B cell (primary cell): ENCODE measurements at regions of chr12 and their contacts with region 1.

Region 1: DNA sequence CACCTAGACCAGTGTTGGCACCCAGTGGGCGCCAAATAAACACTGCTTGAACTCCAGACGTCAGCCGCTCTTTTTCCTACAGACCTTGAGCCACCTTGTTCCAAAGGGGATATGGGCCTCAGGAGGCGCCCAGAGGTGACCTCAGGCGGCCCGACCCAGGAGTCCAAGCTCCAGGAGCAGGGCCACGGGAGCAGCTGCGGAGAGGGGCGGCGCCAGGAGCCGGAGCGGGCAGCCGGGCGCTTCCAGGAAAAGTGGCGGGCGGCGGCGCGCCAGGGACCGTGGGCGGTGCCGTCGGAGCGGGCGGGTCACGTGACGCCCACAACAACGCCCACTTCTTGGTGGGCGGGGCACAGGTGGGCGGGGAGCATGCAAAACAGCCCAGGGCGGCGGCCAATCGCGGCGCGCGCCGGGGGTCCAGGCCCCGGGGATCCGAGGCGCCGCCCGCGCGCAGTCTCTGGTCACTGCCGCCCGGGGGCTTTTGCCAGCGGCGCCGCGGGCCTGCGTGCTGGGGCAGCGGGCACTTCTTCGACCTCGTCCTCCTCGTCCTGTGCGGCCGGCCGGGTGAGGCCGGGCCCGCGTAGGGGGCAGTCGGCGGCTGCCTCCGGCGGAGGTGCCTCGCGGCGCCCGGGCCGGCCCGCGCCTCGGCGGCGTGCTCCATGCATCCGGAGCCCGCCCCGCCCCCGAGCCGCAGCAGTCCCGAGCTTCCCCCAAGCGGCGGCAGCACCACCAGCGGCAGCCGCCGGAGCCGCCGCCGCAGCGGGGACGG is at the start of gene ORAI1:
- DNase-seq: peak; percentile 97
- ATAC-seq: peak; percentile 76
- H3K4me3 ChIP-seq: peak within 1 kb of the TSS; percentile 61 to 93 (median 82)
- H3K4me3 Mint-ChIP-seq: peak within 1 kb of the TSS; percentile 96
- H3K27ac ChIP-seq: peak within 1 kb of the TSS; percentile 87 to 91
- H3K27ac Mint-ChIP-seq: peak within 1 kb of the TSS; percentile 96
- H3K4me1 ChIP-seq: peaks cover 40 to 50% of the 10 kb centered on the region in 2 donors
- H3K4me1 Mint-ChIP-seq: peaks cover 48% of the 10 kb centered on the region
- H3K27me3 ChIP-seq: no peaks in the 10 kb centered on the region
- H3K27me3 Mint-ChIP-seq: no peaks in the 10 kb centered on the region
- CTCF ChIP-seq: no peak
- total RNA-seq, gene ORAI1: 43.2 and 44.2 TPM in 2 replicates

Region 2: GRCh38 chr12:121467115-121467793 is 159.0 kb before region 1 on chr12:
- CTCF ChIA-PET with region 1: interaction called, 3 read pairs
- POLR2A ChIA-PET with region 1: interaction called, 4 read pairs
- intact Hi-C with region 1: loop called (anchors 2 kb)
- DNase-seq: peak; percentile 94
- ATAC-seq: peak; percentile 85
- H3K4me3 ChIP-seq: peak overlapping the region in 4 of 5 experiments; percentile 56 to 82 (median 76)
- H3K4me3 Mint-ChIP-seq: peak overlapping the region; percentile 49
- H3K27ac ChIP-seq: peak overlapping the region; percentile 62 to 82
- H3K27ac Mint-ChIP-seq: peak overlapping the region; percentile 86
- H3K4me1 ChIP-seq: peaks cover 23 to 49% of the 10 kb centered on the region in 2 donors
- H3K4me1 Mint-ChIP-seq: peaks cover 59% of the 10 kb centered on the region
- H3K27me3 ChIP-seq: no peaks in the 10 kb centered on the region
- H3K27me3 Mint-ChIP-seq: no peaks in the 10 kb centered on the region
- CTCF ChIP-seq: no peak

Region 3: GRCh38 chr12:121560392-121561008 is 65.8 kb before region 1 on chr12:
- CTCF ChIA-PET with region 1: interaction called, 213 read pairs
- POLR2A ChIA-PET with region 1: interaction called, 9 read pairs
- intact Hi-C with region 1: no loop called
- DNase-seq: peak; percentile 90
- ATAC-seq: peak; percentile 78
- H3K4me3 ChIP-seq: no peak overlapping the region
- H3K4me3 Mint-ChIP-seq: peak overlapping the region; percentile 53
- H3K27ac ChIP-seq: peak overlapping the region; percentile 58
- H3K27ac Mint-ChIP-seq: peak overlapping the region; percentile 91
- H3K4me1 ChIP-seq: peaks cover 29 to 48% of the 10 kb centered on the region in 2 donors
- H3K4me1 Mint-ChIP-seq: peaks cover 40% of the 10 kb centered on the region
- H3K27me3 ChIP-seq: no peaks in the 10 kb centered on the region
- H3K27me3 Mint-ChIP-seq: no peaks in the 10 kb centered on the region
- CTCF ChIP-seq: no peak

Region 4: GRCh38 chr12:121590476-121591143 is 35.7 kb before region 1 on chr12:
- CTCF ChIA-PET with region 1: interaction called, 29 read pairs
- POLR2A ChIA-PET with region 1: interaction called, 33 read pairs
- intact Hi-C with region 1: loop called (anchors 1 kb)
- DNase-seq: peak; percentile 82
- ATAC-seq: peak; percentile 67
- H3K4me3 ChIP-seq: peak overlapping the region; percentile 15 to 61 (median 47)
- H3K4me3 Mint-ChIP-seq: peak overlapping the region; percentile 92
- H3K27ac ChIP-seq: peak overlapping the region; percentile 96 to 99
- H3K27ac Mint-ChIP-seq: peak overlapping the region; percentile 100
- H3K4me1 ChIP-seq: peaks cover 26 to 37% of the 10 kb centered on the region in 2 donors
- H3K4me1 Mint-ChIP-seq: peaks cover 34% of the 10 kb centered on the region
- H3K27me3 ChIP-seq: no peaks in the 10 kb centered on the region
- H3K27me3 Mint-ChIP-seq: no peaks in the 10 kb centered on the region
- CTCF ChIP-seq: no peak

Region 5: DNA sequence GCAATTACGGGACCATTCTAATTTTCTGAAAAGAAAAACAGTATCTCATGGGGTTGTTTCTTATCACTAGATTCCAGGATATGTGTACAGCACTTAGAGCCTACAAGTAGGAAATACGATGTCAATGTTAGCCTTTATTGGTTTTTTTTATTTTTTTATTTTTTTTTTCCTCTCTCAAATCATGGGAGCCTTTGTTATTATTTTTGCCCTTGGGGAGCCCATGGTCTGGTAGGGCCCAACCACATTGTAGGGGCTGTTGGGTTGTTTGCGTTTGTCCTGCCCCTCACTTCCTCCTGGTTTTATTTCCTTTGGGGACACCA is 37.3 kb after region 1 on chr12:
- CTCF ChIA-PET with region 1: interaction called, 53 read pairs
- POLR2A ChIA-PET with region 1: interaction called, 19 read pairs
- intact Hi-C with region 1: loop called (anchors 1 kb)
- DNase-seq: no peak
- ATAC-seq: no peak
- H3K4me3 ChIP-seq: peak overlapping the region in 4 of 5 experiments; percentile 10 to 93 (median 77)
- H3K4me3 Mint-ChIP-seq: peak overlapping the region; percentile 92
- H3K27ac ChIP-seq: peak overlapping the region in 1 of 2 donors; percentile 86
- H3K27ac Mint-ChIP-seq: peak overlapping the region; percentile 94
- H3K4me1 ChIP-seq: peaks cover 39 to 48% of the 10 kb centered on the region in 2 donors
- H3K4me1 Mint-ChIP-seq: peaks cover 47% of the 10 kb centered on the region
- H3K27me3 ChIP-seq: no peaks in the 10 kb centered on the region
- H3K27me3 Mint-ChIP-seq: no peaks in the 10 kb centered on the region
- CTCF ChIP-seq: no peak

Region 6: DNA sequence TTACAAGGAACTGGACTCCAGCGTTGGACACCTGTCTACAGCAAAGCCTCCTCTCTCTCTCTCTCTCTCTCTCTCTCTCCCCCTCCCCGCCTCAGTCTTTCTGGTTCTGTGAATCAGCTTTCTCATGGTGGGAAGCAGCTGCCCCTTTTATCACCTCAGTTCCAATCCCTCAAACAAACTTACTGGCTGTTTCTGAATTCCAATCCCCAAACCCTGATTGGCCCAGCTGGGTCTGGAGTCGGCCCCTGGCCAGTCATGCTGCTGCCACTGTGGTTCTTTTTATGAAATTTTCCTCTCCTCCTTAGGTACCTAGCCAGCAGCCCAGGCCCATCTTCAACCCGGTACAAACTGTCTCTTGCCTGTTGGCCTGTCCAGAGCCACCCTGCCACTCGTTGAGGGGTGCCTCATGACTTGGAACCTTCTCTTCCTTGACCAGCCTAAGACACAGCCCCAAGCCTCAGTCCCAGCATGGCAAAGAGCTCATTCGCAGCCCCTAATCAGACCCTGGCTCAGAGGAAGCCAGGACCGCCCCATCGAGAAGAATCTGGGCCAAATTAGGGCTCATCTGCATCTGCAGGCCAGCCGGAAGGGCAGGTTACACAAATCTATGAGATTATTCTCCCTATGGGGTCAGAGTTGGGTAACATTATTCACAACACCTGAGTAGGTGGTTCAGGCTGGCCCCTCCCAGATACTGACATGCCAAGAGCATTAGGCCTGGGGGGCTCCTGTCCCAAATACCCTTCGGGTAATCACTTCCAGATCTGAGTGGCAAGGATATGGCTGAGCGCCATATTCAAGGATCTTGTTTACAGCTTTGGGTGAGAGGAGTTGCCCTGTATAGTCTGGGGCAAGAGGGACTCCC is 52.7 kb after region 1 on chr12:
- CTCF ChIA-PET with region 1: interaction called, 39 read pairs
- POLR2A ChIA-PET with region 1: interaction called, 7 read pairs
- intact Hi-C with region 1: no loop called
- DNase-seq: no peak
- ATAC-seq: no peak
- H3K4me3 ChIP-seq: no peak overlapping the region
- H3K4me3 Mint-ChIP-seq: no peak overlapping the region
- H3K27ac ChIP-seq: no peak overlapping the region
- H3K27ac Mint-ChIP-seq: peak overlapping the region; percentile 65
- H3K4me1 ChIP-seq: peaks cover 0 to 3% of the 10 kb centered on the region in 2 donors
- H3K4me1 Mint-ChIP-seq: peaks cover 2% of the 10 kb centered on the region
- H3K27me3 ChIP-seq: no peaks in the 10 kb centered on the region
- H3K27me3 Mint-ChIP-seq: no peaks in the 10 kb centered on the region
- CTCF ChIP-seq: no peak

Region 7: DNA sequence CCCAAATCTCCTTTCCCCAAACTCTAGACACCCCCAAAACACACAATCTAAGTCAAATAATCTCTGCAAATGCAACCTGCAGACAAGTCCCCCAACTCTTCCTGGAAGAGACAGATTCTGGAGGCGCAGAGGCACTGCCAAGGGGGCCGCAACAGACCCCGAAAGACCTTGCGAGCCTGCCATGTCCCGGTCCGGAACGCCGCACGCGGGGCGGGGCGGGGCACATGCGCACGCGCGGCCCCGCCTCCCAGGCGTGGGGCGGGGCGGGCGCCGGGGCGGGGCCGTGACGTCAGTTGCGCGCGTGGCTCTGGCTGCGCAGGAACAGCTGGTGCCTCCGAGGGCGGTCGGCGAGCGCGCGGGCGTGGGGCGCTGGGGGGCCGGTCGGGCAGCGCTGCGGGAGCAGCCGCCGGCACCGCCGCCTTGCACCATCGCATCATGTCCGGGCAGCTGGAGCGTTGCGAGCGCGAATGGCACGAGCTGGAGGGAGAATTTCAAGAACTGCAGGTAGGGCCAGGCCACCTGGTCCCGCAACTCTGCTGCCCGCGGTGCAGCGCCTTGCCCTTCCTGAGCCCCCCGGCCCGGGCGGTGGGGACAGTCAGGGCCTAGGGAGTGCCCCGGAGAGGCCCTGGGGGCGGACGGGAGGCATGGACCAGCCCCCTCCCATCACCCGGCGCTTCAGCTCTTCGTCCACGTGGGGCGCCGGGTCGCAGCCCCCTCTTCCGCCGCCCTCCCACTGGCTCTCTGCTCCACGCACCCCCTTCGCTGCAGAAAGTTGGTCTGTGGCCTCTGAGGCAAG is 86.4 kb after region 1 on chr12 and contains the start of gene TMEM120B:
- CTCF ChIA-PET with region 1: interaction called, 4 read pairs
- POLR2A ChIA-PET with region 1: interaction called, 3 read pairs
- intact Hi-C with region 1: loop called (anchors 1 kb)
- DNase-seq: peak; percentile 93
- ATAC-seq: peak; percentile 92
- H3K4me3 ChIP-seq: peak within 1 kb of the TSS; percentile 84 to 97 (median 89)
- H3K4me3 Mint-ChIP-seq: peak within 1 kb of the TSS; percentile 92
- H3K27ac ChIP-seq: peak within 1 kb of the TSS; percentile 48 to 63
- H3K27ac Mint-ChIP-seq: peak within 1 kb of the TSS; percentile 89
- H3K4me1 ChIP-seq: peaks cover 22 to 28% of the 10 kb centered on the region in 2 donors
- H3K4me1 Mint-ChIP-seq: peaks cover 25% of the 10 kb centered on the region
- H3K27me3 ChIP-seq: no peaks in the 10 kb centered on the region
- H3K27me3 Mint-ChIP-seq: no peaks in the 10 kb centered on the region
- CTCF ChIP-seq: no peak
- total RNA-seq, gene TMEM120B: 9.2 and 11.5 TPM in 2 replicates

Region 8: DNA sequence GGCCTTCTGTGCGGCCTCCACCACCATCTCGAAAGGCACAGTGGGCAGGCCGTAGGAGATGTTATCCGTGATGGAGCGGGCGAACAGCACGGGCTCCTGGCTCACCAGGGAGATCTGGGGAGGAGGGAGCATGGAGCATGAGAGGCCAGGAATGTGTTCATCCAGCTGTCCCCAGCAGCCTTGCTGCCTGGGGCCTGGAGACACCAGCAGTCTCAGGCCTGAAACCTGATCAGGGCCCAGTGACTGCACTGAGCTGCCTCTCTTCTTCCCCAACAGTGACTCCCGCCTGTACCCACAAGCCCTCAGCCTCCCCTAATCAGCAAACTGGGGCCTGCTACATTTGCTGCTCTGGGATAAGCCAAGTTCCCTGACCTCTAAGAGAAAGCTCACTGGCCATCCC is 1309.0 kb after region 1 on chr12:
- CTCF ChIA-PET with region 1: no interaction called
- POLR2A ChIA-PET with region 1: no interaction called
- intact Hi-C with region 1: no loop called
- DNase-seq: no peak
- ATAC-seq: no peak
- H3K4me3 ChIP-seq: no peak overlapping the region
- H3K4me3 Mint-ChIP-seq: no peak overlapping the region
- H3K27ac ChIP-seq: no peak overlapping the region
- H3K27ac Mint-ChIP-seq: no peak overlapping the region
- H3K4me1 ChIP-seq: peaks cover 7 to 23% of the 10 kb centered on the region in 2 donors
- H3K4me1 Mint-ChIP-seq: peaks cover 10% of the 10 kb centered on the region
- H3K27me3 ChIP-seq: no peaks in the 10 kb centered on the region
- H3K27me3 Mint-ChIP-seq: no peaks in the 10 kb centered on the region
- CTCF ChIP-seq: no peak